ENCODE measurements at regions of chr19 and their contacts with region 1.

Region 1: DNA sequence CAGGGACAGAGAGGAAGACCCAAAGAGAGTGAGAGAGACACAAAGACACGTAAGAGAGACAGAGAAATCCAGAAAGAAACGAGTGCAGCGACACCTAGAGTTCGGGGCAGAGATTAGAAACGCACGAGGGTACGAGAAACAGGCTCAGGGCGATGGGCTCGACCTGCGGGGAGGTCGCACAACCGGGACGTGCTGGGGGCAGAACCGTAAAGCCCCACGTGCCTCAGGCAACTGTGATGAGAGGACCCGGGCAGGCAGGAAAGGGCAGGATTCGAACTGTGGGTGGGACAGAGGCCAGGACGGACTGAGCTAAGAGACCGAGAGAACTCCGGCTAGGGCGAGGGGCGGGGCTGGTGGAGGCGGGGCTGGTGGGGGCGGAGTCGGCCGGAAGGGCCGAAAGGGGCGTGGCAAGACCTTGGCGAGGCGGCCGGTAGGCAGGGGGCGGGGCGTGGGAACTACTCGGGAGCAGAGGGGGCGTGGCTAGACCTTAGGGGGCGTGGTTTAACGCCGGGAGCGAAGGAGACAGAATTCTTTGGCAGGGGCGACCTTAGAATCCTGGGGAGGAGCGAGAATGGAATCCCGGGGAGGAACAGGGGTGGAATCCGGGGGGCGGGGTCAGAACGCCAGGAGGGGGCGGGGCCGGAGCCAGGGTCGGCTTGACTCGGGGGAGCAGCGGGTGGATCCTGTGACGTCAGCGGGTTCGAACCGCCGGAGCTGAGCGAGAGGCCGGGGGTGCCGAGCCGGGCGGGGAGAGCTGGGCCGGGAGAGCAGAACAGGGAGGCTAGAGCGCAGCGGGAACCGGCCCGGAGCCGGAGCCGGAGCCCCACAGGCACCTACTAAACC is at the start of gene NECTIN2:
- DNase-seq: peak; percentile 100
- H3K4me3 ChIP-seq: peak within 1 kb of the TSS; percentile 100
- H3K27ac ChIP-seq: peak within 1 kb of the TSS; percentile 96
- H3K4me1 ChIP-seq: peaks cover 64% of the 10 kb centered on the region
- H3K27me3 ChIP-seq: no peaks in the 10 kb centered on the region
- CTCF ChIP-seq: peak; percentile 70
- total RNA-seq, gene NECTIN2: 40.7 TPM

Region 2: GRCh38 chr19:44796701-44797115 is 49.1 kb before region 1 on chr19:
- intact Hi-C with region 1: loop called (anchors 10 kb)
- DNase-seq: peak; percentile 66
- H3K4me3 ChIP-seq: peak overlapping the region; percentile 14
- H3K27ac ChIP-seq: peak overlapping the region; percentile 90
- H3K4me1 ChIP-seq: peaks cover 21% of the 10 kb centered on the region
- H3K27me3 ChIP-seq: no peaks in the 10 kb centered on the region
- CTCF ChIP-seq: no peak